Mammary epithelial cell (primary cell): ENCODE measurements at regions of chrX and their contacts with region 1.

Region 1: DNA sequence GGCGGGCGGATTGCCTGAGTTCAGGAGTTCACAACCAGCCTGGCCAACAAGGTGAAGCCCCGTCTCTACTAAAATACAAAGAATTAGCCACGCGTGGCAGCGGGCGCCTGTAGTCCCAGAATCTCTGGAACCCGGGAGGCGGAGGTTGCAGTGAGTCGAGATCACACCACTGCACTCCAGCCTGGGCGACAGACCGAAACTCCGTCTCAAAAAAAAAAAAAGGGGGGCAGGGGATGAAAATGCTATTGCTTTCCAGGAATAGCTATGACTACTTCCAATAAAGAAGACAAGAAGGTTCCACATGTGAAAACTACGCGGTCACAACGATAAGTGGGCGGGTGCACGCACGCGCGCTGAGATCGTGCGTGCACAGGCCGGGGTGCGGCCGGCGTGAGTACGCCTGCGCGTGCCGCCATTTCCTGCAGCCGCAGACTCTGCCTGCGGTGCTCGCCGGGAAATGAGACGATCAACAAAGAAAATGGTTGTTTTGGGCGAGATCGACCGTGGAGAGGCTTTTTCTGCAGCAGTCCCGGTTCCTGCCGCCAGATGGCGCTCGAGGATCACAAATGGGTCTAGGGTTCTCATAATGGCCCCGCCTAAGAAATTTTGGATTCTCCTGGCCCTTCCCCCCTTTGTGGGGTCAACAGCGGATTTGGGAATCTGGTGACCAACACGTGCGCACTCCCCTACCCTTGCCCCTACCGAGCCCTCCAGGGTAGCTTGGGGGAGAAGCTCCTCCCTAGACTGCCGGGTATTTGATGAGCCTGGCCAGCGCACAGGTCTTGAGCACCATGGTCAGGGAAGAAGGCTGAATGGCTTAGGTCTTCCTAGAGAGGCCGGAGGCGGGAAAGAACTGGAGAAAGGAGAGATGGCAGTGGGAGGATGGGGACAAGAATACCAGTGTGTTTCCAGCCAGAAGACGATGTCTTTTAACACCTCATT is 35.1 kb downstream of the PNMA5 start:
- DNase-seq: peak; percentile 73
- H3K4me3 ChIP-seq: no peak overlapping the region
- H3K27ac ChIP-seq: peak overlapping the region; percentile 36
- H3K4me1 ChIP-seq: no peaks in the 10 kb centered on the region
- H3K27me3 ChIP-seq: no peaks in the 10 kb centered on the region
- CTCF ChIP-seq: peak; percentile 52 to 75

Region 2: DNA sequence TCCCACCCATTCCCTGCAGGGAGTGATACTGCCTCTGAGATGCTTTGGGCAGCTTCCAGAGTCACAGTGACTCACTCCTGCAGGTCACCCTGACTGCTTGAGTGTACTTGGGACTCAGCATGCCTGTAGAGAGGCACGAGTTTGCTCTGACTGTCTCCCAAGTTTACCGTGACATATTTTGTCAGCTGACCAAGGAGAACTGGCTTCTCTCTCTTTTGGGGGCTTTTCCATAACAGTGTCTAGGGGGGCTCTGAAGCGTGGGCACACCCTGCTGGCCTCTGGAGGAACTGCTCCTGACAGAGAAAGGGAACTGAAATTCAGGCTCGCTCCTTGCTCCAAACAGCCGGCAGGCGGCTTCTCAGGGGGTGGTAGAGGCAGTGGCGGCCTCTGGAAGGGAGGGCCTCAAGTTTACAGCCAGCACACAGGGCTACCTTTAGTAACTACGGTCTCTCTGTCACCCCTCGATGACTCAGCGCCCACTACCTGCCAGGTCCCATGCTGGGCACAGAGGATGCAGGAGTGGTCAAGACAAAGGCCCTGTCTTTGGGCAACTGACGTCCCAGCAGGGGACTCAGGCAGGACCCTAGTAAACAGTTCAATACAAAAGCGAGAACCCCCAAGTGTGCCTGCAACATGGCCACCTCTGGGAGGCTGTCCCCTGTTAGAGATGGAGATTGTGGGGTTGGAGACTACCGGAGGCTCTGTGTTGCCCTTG is 43.1 kb before region 1 on chrX:
- CTCF ChIA-PET with region 1: no interaction called
- dilution Hi-C with region 1: no loop called
- in situ Hi-C with region 1: no loop called
- intact Hi-C with region 1: no loop called
- DNase-seq: peak; percentile 20
- H3K4me3 ChIP-seq: no peak overlapping the region
- H3K27ac ChIP-seq: no peak overlapping the region
- H3K4me1 ChIP-seq: no peaks in the 10 kb centered on the region
- H3K27me3 ChIP-seq: no peaks in the 10 kb centered on the region
- CTCF ChIP-seq: peak; percentile 35 to 45

Region 3: DNA sequence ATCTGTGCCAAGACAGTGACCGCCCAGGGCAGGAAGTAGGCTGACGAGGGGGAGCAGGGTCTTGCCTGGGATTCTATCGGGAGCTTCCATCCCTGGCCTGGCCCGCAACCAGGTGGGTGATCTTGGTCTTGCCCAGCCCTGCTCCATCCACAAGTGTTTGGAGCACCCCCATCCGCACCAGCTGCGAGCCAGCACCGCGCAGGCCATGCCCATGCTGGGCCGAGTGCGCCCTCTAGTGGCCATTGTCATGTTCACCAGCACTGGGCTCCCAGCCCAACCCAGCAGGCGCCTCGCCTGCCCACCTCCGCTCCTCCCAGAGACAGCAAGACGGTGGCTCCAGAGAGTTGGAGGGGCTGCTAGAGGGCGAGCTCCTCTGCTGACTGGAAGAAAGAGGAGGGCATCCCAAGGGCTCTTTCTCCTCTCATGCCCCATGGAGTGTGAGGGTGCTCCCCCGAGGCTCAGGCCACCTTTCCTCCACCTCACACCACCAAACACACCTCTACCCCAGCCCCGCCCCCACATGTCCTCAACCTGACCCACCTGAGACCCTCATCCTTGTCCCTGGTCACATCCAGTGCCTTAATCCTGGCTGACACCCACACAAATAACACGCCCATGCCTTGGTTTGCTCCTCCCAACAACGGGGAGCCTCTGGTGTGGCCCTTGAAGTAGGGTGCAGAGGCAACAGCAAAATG is 548.8 kb after region 1 on chrX:
- CTCF ChIA-PET with region 1: no interaction called
- dilution Hi-C with region 1: no loop called
- in situ Hi-C with region 1: no loop called
- intact Hi-C with region 1: loop called (anchors 2 kb)
- DNase-seq: peak; percentile 47
- H3K4me3 ChIP-seq: no peak overlapping the region
- H3K27ac ChIP-seq: no peak overlapping the region
- H3K4me1 ChIP-seq: no peaks in the 10 kb centered on the region
- H3K27me3 ChIP-seq: no peaks in the 10 kb centered on the region
- CTCF ChIP-seq: peak; percentile 51 to 78